ENCODE measurements at regions of chr16 and their contacts with region 1.

Region 1: DNA sequence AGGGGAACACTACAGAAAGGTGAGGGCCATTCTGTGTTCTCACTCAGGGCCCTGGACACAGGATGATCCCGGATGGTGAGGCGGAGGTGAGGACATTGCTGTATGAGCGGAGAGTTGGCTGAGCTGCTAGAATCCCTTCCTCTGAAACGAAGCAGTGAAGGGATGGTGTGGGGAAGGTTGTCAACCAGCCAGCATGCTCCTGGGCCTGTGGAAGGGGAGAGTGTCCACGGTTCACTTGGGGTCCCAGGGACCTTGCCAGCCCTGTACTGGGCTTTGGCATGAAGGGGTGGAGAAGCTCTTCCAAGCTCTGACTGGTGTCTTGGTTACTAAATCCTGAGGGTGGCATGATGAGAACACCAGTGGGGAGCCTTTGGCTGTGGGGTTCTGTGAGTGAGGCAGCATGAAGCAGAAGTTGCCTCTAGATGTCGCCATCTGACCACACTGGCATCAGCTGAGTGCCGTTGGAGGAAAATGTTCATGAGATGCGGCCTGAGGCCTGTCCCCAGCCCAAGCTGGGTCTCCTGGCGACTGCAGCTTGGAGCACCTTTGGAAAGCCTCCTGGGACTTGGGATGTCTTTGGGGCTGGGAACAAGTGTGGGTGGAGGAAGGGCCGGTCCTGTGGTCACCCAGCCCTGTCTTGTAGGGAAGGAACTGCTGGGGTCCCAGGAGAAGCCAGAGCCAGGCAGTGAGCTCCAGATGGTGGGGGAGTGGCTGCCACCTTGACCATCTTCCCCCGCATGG is 14.8 kb downstream of the PDP2 start:
- DNase-seq: peak; percentile 79 to 83
- ATAC-seq: peak; percentile 76
- H3K4me3 ChIP-seq: no peak overlapping the region
- H3K27ac ChIP-seq: no peak overlapping the region
- H3K4me1 ChIP-seq: peaks cover 0 to 4% of the 10 kb centered on the region in 2 donors
- H3K27me3 ChIP-seq: no peaks in the 10 kb centered on the region

Region 2: GRCh38 chr16:66947302-66948065 is 52.4 kb after region 1 on chr16:
- intact Hi-C with region 1: loop called in 1 of 2 experiments (anchors 2 kb)
- DNase-seq: peak; percentile 82 to 92
- ATAC-seq: peak; percentile 88
- H3K4me3 ChIP-seq: peak overlapping the region in 1 of 2 donors; percentile 21
- H3K27ac ChIP-seq: no peak overlapping the region
- H3K4me1 ChIP-seq: no peaks in the 10 kb centered on the region
- H3K27me3 ChIP-seq: no peaks in the 10 kb centered on the region

Region 3: GRCh38 chr16:67150833-67151396 is 255.8 kb after region 1 on chr16 and contains the start of gene B3GNT9:
- intact Hi-C with region 1: loop called (anchors 5 to 10 kb)
- DNase-seq: peak; percentile 89 to 93
- ATAC-seq: peak; percentile 88
- H3K4me3 ChIP-seq: peak within 1 kb of the TSS; percentile 49 to 59
- H3K27ac ChIP-seq: peak within 1 kb of the TSS in 1 of 2 donors; percentile 41
- H3K4me1 ChIP-seq: no peaks in the 10 kb centered on the region
- H3K27me3 ChIP-seq: no peaks in the 10 kb centered on the region
- total RNA-seq, gene B3GNT9: 13.0 to 21.3 TPM

Region 4: DNA sequence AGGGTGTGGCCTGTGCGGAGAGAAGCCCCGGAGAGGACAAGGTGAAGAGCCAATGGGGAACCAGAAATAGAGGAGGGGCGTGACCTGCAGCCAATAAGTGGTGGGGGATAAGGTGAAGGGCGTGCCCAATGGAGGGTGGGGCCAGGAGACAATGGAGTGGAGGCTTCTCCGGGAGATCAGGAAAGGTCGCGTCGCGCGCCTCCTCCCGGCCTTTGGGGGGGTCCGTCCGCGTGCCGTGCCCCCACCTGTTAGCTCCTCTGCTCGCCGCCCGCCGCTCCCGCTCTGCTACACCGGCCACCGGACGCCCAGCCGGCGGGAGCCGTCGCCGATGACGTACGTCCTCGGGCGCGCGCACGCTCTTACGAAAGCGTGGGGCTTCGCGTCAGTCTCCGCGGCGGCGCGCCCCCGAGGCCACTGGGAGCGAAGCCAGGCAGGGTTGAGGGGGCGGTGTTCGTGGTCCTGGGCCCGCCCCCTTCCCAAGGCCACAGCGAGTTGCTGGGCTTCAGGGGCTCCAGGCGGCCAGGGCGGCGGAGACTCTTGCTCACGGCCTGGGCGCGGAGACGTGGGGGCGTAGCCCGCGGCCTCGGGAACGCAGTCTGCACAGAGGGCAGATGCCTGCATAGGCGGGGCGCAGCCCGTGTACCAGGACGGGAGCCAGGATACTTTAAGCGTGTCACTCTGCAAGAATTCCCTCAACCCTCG is 288.7 kb after region 1 on chr16 and contains the start of gene MATCAP1:
- intact Hi-C with region 1: loop called in 1 of 2 experiments (anchors 10 kb)
- DNase-seq: peak; percentile 97
- ATAC-seq: peak; percentile 94
- H3K4me3 ChIP-seq: peak within 1 kb of the TSS; percentile 24 to 54
- H3K27ac ChIP-seq: peak within 1 kb of the TSS in 1 of 2 donors; percentile 81
- H3K4me1 ChIP-seq: no peaks in the 10 kb centered on the region
- H3K27me3 ChIP-seq: no peaks in the 10 kb centered on the region
- total RNA-seq, gene MATCAP1: 18.1 to 33.8 TPM

Measured in aorta (tissue), 5 donors.